ENCODE measurements at regions of chr16 and their contacts with region 1.

Region 1: DNA sequence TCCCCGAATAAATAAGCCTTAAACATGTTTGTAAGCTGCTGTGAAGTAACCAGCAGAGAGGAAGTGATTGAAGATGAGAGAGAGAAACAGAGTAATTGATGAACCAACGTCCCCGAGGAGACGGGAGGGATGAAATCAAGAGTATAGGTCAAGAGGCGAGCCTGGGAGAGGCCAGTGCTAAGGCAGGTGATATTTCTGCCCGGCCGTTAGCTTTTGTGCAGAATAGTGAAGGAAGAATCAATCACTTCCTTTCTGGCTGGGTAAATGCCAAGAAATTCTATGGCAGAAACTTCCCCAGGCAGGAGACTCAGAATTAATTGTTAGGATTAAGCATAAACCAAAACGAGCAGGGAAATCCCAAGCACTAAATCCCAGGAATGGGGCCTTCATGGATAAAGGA is 273.8 kb downstream of the CDH13 start:
- DNase-seq: no peak
- ATAC-seq: no peak
- H3K4me3 ChIP-seq: no peak overlapping the region
- H3K27ac ChIP-seq: no peak overlapping the region
- H3K4me1 ChIP-seq: no peaks in the 10 kb centered on the region
- H3K27me3 ChIP-seq: no peaks in the 10 kb centered on the region
- CTCF ChIP-seq: no peak
- POLR2A ChIP-seq: no peak
- RAD21 ChIP-seq: no peak

Region 2: DNA sequence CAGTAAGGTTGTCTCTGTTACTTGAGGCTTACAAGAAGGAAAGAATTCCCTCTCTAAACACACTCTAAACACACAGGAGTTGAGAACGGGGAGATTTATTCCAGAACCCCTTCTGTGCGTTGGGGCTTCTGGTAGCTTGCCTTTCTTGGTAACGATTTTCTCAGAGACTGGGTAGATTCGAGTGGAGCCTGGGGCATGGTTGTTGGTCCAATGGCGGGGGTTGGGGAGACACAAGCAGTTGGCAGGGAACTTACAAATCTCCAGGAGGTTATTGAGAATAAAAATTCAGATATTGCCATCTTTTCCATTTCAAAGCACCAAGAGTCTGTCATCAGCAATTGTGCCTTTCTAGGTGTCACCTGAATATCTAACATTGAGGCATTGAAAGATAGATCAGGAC is 22.1 kb before region 1 on chr16:
- CTCF ChIA-PET with region 1: interaction called, 4 read pairs
- POLR2A ChIA-PET with region 1: interaction called, 11 read pairs
- dilution Hi-C with region 1: no loop called
- in situ Hi-C with region 1: no loop called
- intact Hi-C with region 1: no loop called
- DNase-seq: no peak
- ATAC-seq: no peak
- H3K4me3 ChIP-seq: no peak overlapping the region
- H3K27ac ChIP-seq: no peak overlapping the region
- H3K4me1 ChIP-seq: no peaks in the 10 kb centered on the region
- H3K27me3 ChIP-seq: no peaks in the 10 kb centered on the region
- CTCF ChIP-seq: no peak
- POLR2A ChIP-seq: no peak
- RAD21 ChIP-seq: no peak

Measured in IMR-90 (cell line).